ENCODE measurements at regions of chr15 and their contacts with region 1.

Region 1: DNA sequence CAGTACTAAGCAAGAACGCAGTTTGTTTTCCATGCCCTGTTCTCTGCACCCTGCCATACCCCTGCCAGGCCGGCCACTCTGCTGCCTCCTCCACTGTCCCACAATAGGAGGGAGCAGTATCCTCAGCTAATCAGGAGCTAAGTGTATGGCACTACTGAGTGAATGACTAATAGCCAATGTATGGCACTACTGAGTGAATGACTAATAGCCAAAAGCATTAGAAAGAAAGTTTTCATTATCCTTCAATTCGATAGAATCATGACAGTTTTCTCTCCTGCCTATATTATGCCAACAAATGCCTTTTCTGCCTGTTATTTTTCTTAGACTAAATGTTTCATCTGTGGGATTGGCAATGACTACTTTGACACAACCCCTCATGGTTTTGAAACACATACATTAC is 107.5 kb upstream of the CHRM5 start:
- DNase-seq: no peak
- H3K4me3 ChIP-seq: no peak overlapping the region
- H3K27ac ChIP-seq: no peak overlapping the region
- H3K27me3 ChIP-seq: no peaks in the 10 kb centered on the region
- CTCF ChIP-seq: no peak

Region 2: DNA sequence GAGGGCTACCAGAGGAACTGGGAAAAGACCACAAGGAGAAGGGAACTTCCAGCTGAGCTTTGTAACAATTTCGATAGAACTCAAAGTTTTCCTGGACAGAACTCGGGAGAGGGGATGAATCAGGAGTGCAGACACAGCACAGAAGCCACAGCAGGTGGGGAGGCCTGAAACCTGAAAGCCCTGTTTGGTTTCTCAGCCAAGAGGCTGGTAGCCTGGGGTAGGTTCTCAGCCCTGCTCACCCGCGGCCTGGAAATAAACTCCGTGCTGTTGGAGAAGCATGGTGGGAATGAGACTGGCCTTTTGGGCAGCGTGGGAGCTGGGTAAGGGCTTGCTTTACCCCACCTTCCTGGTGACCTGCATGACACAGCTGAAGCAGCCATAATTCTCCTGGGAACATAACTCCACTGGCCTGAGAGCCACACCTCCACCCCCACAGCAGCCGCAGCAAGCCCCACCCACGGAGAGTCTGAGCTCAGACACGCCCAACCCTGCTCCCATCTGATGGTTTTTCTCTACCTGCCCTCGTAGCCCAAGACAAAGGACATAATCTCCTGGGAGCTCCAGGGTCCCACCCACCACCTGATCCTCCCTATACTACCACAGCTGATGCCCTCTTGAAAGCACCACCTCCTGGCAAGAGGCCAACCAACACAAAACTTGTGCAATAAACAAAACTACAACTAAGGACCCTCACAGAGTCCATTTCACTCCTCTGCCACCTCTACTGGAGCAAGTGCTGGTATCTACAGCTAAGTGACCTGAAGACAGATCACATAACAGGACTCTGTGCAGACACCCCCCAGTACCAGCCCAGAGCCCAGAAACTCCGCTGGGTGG is 55.0 kb after region 1 on chr15:
- intact Hi-C with region 1: loop called in 1 of 2 experiments (anchors 10 kb)
- DNase-seq: no peak
- H3K4me3 ChIP-seq: no peak overlapping the region
- H3K27ac ChIP-seq: no peak overlapping the region
- H3K27me3 ChIP-seq: no peaks in the 10 kb centered on the region
- CTCF ChIP-seq: no peak

Region 3: DNA sequence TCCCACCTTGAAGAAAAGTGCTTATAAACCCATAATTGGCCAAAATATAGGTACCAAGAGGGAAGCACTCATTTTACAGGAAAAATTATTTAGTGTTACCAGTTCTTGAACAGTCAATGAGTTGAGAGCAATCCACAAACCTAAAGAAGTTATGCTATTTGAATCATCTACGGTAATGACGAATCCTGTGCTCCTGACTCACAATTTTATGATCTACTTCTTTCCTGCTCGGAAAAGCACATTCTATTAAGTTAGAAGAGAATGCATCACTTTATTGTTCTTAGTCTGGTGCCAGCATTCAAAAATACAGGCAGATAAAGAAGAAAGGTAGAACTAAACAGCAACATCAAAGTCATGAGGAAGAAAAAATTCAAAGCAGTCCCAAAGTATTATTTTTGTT is 140.8 kb after region 1 on chr15:
- intact Hi-C with region 1: no loop called
- DNase-seq: no peak
- H3K4me3 ChIP-seq: no peak overlapping the region
- H3K27ac ChIP-seq: no peak overlapping the region
- H3K27me3 ChIP-seq: no peaks in the 10 kb centered on the region
- CTCF ChIP-seq: no peak

Region 4: DNA sequence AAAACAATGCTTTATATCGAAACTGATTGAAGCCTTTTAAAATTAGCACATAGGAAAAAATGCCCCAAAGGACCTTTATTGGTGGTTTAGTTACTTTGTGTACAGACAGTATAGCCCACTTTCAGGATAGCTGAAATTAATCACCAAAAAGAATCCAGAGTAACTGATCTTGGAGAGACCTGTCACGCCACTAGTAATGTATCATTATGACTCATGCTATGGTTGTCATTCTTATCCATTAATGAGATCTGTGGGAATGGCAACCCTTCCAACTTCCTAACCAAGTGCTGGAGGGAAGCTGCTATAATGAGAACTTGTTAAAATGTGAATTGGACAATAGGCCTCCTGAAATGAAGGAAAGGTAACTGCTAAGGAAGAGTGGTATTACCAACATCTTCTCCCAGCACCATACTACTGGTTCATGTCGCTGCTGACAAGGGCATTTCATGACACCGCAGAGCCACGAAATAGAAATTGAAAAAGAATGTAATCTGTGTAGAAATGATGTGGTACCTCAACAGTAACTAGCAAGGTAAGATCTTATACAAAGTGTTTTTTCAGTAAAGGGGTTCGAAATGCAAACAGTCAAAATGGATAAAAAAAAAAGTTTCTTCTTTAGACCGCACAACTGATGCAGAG is 357.0 kb after region 1 on chr15:
- intact Hi-C with region 1: no loop called
- DNase-seq: no peak
- H3K4me3 ChIP-seq: no peak overlapping the region
- H3K27ac ChIP-seq: no peak overlapping the region
- H3K27me3 ChIP-seq: no peaks in the 10 kb centered on the region
- CTCF ChIP-seq: no peak

Measured in dorsolateral prefrontal cortex (tissue), 120 donors.